Activated naive CD4-positive, alpha-beta T cell treated with anti-CD3 and anti-CD28 coated beads, Interleukin-2, amount 10 ng/mL, durations not matched to agents 7 days and 5 days (primary cell): ENCODE measurements at regions of chr9 and their contacts with region 1.

Region 1: GRCh38 chr9:93108291-93109041 is 12.4 kb downstream of the CARD19 start:
- DNase-seq: peak; percentile 48
- H3K4me3 Mint-ChIP-seq: no peak overlapping the region
- H3K27ac Mint-ChIP-seq: peak overlapping the region; percentile 73
- H3K4me1 Mint-ChIP-seq: peaks cover 54% of the 10 kb centered on the region
- H3K27me3 Mint-ChIP-seq: no peaks in the 10 kb centered on the region

Region 2: DNA sequence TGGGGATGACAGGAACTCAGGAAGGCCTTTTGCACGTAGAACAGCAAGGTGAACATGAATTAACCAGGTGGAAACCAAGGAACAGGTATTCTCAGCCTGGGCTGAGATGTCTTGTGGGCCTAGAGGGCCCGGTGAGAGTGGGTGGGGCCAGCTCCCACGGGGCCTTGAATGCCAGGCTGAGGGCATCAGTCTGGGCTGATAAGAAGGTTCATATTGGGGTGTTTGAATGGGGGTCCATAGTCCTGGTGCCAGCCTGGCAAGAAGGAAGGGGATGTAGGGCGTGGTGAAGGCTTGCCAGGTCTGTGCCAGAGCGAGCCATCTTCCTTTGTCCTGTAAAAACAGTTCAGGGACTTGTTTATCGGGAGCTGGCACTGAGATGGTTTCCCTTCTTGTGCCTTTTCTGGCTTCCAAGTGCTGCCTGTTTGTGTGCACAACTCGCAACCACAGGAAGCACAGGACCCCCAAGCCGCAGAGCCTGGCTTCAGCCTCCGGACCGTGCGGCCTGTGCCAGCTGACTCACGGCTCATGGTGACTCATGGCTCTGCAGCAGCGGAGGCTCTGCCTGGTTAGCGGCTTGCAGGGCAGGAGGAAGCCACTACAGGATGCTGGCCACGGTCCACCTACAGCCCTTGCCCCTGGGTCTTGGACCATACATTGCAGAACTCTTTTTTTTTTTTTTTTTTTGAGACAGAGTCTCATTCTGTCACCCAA is 10.1 kb before region 1 on chr9:
- CTCF ChIA-PET with region 1: interaction called, 20 read pairs
- DNase-seq: peak; percentile 66
- H3K4me3 Mint-ChIP-seq: peak overlapping the region; percentile 83
- H3K27ac Mint-ChIP-seq: peak overlapping the region; percentile 93
- H3K4me1 Mint-ChIP-seq: peaks cover 65% of the 10 kb centered on the region
- H3K27me3 Mint-ChIP-seq: no peaks in the 10 kb centered on the region

Region 3: DNA sequence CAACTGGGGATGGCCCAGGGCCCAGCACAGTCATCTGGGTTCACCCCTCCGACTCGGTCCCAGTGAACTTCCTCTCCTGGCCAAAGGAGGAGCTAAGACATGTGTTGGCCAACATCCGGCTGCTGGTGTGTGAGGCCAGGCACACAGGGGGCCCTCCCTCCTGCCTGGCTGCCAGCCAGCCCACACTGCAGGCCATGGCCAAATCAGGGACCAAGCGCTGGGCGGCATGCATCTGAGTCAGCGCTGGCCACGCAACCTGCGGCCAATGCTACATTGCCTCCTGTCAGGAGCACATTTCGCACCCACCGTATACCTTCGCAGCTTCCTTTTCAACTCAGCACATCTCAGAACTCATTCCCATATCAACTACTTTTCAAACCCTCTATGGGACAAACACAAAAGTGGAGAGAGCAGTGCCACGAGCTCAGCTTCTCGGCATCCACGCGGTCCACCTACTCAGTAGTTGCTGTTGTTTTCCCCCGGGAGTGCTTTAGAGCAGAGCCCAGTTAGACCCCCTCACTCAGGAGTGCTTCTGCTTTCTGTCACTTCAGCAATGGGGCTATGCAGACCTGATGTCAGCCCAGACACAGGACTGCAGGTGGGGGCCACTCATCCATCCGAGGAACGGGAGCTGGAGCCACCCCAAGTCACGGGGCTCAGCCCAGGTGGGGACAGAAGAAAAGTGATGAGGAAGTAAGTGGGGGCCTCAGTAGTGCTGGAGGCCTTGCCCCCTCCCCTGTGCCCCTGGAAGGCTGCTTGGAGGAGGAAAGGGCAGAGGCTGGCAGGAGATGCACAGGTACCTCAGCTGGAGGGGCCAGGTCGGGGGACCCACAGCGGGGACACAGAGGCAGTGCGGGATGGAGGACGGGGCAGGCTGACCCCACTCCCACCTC is 11.7 kb after region 1 on chr9:
- CTCF ChIA-PET with region 1: interaction called, 39 read pairs
- DNase-seq: peak; percentile 60
- H3K4me3 Mint-ChIP-seq: no peak overlapping the region
- H3K27ac Mint-ChIP-seq: peak overlapping the region; percentile 83
- H3K4me1 Mint-ChIP-seq: peaks cover 31% of the 10 kb centered on the region
- H3K27me3 Mint-ChIP-seq: no peaks in the 10 kb centered on the region

Region 4: DNA sequence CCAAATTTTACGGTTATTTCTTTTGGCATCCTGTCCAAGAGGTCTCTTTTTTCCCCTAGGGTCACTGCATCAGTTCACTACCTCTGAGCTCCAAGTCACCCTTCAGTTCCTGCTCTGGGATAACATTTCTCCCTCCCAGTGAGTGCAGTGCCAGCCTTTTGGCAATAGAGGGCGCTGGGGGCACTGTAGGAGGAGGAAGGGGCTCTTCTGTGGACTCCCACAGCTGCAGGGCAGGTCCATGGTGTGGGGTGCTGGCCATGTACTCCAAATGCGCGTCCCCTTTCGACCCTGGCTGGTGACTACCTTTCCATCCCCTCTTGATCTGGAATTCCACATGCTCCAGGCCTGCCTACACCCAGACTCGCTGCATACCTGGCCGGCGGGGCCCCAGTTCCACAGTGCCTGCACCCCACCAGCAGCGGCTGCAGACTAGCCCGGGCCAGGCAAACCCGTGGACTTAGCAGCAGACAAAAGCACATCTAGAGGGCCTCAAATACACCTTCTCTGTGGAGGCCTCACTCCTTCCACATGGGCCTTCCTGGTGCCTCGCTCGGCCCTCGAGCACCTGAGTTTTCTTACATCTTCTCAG is 45.9 kb after region 1 on chr9:
- CTCF ChIA-PET with region 1: interaction called, 10 read pairs
- DNase-seq: peak; percentile 62
- H3K4me3 Mint-ChIP-seq: no peak overlapping the region
- H3K27ac Mint-ChIP-seq: no peak overlapping the region
- H3K4me1 Mint-ChIP-seq: peaks cover 29% of the 10 kb centered on the region
- H3K27me3 Mint-ChIP-seq: no peaks in the 10 kb centered on the region

Region 5: GRCh38 chr9:93231121-93231694 is 122.7 kb after region 1 on chr9:
- CTCF ChIA-PET with region 1: no interaction called
- DNase-seq: no peak
- H3K4me3 Mint-ChIP-seq: no peak overlapping the region
- H3K27ac Mint-ChIP-seq: no peak overlapping the region
- H3K4me1 Mint-ChIP-seq: peaks cover 3% of the 10 kb centered on the region
- H3K27me3 Mint-ChIP-seq: peaks cover 32% of the 10 kb centered on the region

Region 6: DNA sequence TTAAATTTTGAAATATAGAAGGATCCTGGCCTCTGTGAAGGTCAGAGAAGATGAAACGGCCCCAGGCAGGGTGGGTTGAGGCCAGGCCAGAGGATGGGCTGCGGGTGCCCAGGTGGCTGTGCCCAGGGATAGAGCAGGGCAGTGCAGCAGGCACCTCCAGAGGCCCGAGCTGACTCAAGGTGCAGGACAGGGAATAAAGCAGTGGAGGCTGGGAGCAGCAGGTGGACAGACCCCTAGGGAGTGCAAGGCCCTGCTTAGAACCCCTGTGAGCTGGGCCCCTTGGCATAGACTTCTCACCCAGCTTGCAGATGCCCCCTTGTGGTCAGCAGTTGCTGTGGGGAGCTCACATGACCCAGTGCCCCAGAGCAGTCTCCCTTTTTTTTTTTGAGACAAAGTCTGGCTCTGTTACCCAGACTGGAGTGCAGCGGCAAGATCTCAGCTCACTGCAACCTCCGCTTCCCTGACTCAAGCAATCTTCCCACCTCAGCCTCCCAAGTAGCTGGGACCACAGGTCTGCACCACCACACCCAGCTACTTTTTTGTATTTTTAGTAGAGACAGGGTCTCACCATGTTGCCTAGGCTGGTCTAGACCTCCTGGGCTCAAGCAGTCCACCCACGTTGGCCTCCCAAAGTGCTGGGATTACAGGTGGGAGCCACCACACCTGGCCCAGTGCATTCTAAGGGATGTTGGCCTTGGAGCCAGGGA is 194.2 kb after region 1 on chr9:
- CTCF ChIA-PET with region 1: interaction called, 13 read pairs
- DNase-seq: peak; percentile 80
- H3K4me3 Mint-ChIP-seq: no peak overlapping the region
- H3K27ac Mint-ChIP-seq: peak overlapping the region; percentile 64
- H3K4me1 Mint-ChIP-seq: peaks cover 10% of the 10 kb centered on the region
- H3K27me3 Mint-ChIP-seq: peaks cover 4% of the 10 kb centered on the region

Region 7: GRCh38 chr9:93531374-93531773 is 422.9 kb after region 1 on chr9:
- CTCF ChIA-PET with region 1: no interaction called
- DNase-seq: no peak
- H3K4me3 Mint-ChIP-seq: no peak overlapping the region
- H3K27ac Mint-ChIP-seq: no peak overlapping the region
- H3K4me1 Mint-ChIP-seq: peaks cover 2% of the 10 kb centered on the region
- H3K27me3 Mint-ChIP-seq: no peaks in the 10 kb centered on the region